ENCODE measurements at regions of chr10 and their contacts with region 1.

Region 1: DNA sequence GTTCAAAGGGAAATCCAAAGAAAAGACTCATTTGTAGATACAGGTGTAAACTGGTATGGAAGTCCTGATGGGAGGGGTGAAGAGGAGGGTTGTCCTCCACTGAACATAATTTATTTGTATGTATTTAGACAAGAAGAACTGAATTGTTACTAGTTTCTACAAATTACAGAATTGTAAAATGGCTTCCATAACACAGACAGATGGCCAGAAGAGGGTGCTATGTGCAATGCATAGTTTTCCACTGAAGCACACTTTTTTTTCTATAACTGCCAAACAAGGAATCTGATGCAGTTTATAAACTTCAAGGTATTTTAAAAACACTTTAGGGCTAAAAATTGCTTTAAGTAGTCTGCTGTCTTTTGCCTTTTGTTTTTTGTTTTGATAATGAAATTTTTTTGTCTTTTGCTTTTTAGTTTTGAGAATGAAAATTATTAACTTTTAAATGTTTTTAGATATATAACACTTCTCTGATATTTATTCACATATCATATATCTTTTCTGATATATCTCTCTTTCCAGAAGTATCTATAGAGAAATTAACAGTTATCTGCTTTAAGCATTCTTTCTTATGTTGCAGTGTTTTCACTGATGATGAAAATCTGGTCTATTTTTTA is 58.5 kb downstream of the PHYHIPL start:
- DNase-seq: peak in 1 of 10 donors; percentile 26

Region 2: GRCh38 chr10:58781873-58782488 is 452.9 kb before region 1 on chr10:
- intact Hi-C with region 1: loop called (anchors 10 kb)
- DNase-seq: no peak

Region 3: DNA sequence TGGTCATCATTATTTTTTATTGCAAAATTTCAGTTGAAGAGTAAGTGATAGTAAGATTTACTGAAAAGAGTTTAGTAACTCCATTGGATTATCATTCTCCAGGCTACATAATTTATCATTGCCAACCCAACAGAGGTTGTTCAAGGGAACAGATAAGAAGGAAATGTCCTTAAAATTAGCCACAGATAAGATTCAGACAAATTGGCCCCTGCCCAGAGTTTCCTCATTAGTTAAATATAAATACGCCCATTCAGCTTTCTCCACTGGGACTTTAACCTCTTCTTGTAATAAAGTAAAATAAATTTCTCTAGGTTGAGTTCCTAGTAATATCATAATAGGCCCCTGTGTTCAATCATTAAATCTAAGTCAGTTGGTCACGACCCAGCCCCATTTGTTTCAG is 86.2 kb before region 1 on chr10:
- intact Hi-C with region 1: no loop called
- DNase-seq: no peak